ENCODE measurements at regions of chr20 and their contacts with region 1.

Region 1: GRCh38 chr20:53750827-53751619 is 157.4 kb upstream of the ZNF217 start:
- DNase-seq: peak; percentile 69
- ATAC-seq: peak; percentile 83
- H3K4me3 ChIP-seq: peak overlapping the region; percentile 2; the same call in 1 of the 2 replicates
- H3K27ac ChIP-seq: peak overlapping the region; percentile 99
- H3K4me1 ChIP-seq: peaks cover 64% of the 10 kb centered on the region
- H3K27me3 ChIP-seq: no peaks in the 10 kb centered on the region
- CTCF ChIP-seq: no peak
- EP300 ChIP-seq: peak; percentile 56 to 89; a peak in 3 of 4 replicates
- POLR2A ChIP-seq: peak; percentile 45; the same call in 1 of the 2 replicates
- RAD21 ChIP-seq: peak; percentile 47

Region 2: DNA sequence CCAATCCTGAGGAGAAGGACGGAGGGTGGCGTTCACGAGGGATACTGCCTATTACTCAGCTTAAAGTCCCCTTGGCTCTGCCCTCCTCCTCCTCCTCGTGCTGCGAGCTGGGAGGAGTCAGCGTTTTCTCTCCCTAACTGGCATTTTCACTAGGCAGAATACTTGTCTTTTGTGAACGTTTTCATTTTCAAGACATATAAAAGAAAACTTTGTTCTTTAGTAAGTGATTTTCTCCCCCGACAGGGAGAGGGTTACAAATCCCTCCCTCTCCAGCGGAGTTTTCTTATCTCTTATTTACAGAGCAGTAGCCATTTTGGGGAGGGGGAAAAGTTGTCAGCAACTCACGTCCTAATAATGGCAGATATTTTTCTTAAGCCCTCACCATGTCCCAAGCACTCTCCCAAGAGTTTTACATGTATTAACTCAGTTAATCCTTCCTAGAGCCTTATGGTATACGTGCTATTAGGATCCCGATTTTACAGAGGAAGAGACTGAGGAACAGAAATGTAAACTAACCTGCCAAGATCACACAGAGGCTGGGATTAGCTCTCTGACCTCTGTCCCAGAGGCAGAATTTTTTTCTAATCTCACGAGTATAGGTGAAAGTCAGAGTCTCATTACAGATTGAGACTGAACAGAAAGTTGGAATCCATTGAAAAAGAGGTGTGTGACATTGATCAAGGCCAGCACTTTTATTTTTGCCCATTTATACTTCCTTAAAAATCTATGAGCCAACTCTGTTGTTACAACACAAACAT is 127.4 kb before region 1 on chr20:
- CTCF ChIA-PET with region 1: interaction called, 3 read pairs
- POLR2A ChIA-PET with region 1: no interaction called
- RAD21 ChIA-PET with region 1: interaction called, 10 read pairs
- SMC1A ChIA-PET with region 1: interaction called, 15 read pairs
- in situ Hi-C with region 1: no loop called
- intact Hi-C with region 1: no loop called
- DNase-seq: peak; percentile 60
- ATAC-seq: peak; percentile 81
- H3K4me3 ChIP-seq: peak overlapping the region; percentile 54
- H3K27ac ChIP-seq: peak overlapping the region; percentile 99
- H3K4me1 ChIP-seq: peaks cover 38% of the 10 kb centered on the region
- H3K27me3 ChIP-seq: no peaks in the 10 kb centered on the region
- CTCF ChIP-seq: 0 out of 6 replicates have a peak, but pooled peaks of 1 of the 3 experiments have one; percentile 8
- EP300 ChIP-seq: no peak
- POLR2A ChIP-seq: peak; percentile 61
- RAD21 ChIP-seq: 0 out of 2 replicates have a peak, but pooled peaks have one; percentile 10

Region 3: GRCh38 chr20:53684971-53685797 is 65.8 kb before region 1 on chr20:
- CTCF ChIA-PET with region 1: interaction called, 3 read pairs
- POLR2A ChIA-PET with region 1: no interaction called
- RAD21 ChIA-PET with region 1: interaction called, 3 read pairs
- SMC1A ChIA-PET with region 1: interaction called, 10 read pairs
- in situ Hi-C with region 1: no loop called
- intact Hi-C with region 1: no loop called
- DNase-seq: no peak
- ATAC-seq: peak; percentile 25
- H3K4me3 ChIP-seq: no peak overlapping the region
- H3K27ac ChIP-seq: peak overlapping the region; percentile 43; the same call in 1 of the 2 replicates
- H3K4me1 ChIP-seq: peaks cover 25% of the 10 kb centered on the region
- H3K27me3 ChIP-seq: no peaks in the 10 kb centered on the region
- CTCF ChIP-seq: no peak
- EP300 ChIP-seq: no peak
- POLR2A ChIP-seq: no peak
- RAD21 ChIP-seq: no peak

Region 4: DNA sequence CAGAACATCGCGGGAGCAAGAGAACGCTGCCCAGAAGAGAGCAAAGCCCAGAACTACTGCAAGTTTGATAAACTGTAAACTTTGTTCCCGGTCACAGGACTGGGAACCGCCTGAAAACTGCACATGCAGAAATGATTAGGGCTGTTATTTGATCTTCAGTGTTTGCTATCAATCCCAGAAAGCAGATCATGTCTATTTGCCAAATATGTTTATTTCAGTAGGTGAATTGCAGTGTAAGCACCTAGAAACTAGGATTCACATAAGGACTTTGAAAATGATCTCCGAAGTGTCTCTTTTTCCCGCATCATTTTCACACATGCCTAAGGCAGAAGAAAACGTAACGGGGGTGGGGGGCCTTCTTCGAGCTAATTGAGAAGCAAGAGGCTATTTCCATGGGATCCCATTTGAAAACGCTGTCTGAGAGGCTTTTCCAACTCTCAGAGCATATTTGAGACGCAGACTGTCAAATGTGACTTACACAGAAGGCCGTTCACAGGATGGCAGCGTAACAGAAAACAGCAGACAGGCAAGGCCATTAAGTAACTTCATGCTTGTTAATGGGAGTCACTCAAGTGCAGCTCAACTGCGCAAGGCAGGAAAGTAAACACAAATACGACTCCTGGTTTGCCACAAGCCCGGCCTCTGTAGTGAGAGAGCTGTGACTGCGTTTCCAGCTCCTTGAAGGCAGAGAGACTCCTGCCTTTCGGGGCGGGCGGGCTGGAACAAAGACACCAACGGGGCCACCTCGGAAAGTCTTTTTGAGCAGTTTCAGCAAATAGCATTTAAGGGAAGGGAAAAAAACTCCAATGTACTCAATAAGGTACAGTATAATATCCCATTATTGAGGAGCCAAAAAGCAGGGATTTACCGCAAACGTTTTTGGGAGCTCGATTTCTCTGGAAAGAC is 12.7 kb before region 1 on chr20:
- CTCF ChIA-PET with region 1: interaction called, 47 read pairs
- POLR2A ChIA-PET with region 1: interaction called, 49 read pairs
- RAD21 ChIA-PET with region 1: interaction called, 41 read pairs
- SMC1A ChIA-PET with region 1: interaction called, 290 read pairs
- in situ Hi-C with region 1: no loop called
- intact Hi-C with region 1: no loop called
- DNase-seq: no peak
- ATAC-seq: no peak
- H3K4me3 ChIP-seq: 0 out of 2 replicates have a peak overlapping the region, but pooled peaks have one; percentile 69
- H3K27ac ChIP-seq: peak overlapping the region; percentile 86
- H3K4me1 ChIP-seq: peaks cover 56% of the 10 kb centered on the region
- H3K27me3 ChIP-seq: no peaks in the 10 kb centered on the region
- CTCF ChIP-seq: no peak
- EP300 ChIP-seq: no peak
- POLR2A ChIP-seq: no peak
- RAD21 ChIP-seq: no peak

Region 5: GRCh38 chr20:53839423-53840176 is 88.6 kb after region 1 on chr20:
- CTCF ChIA-PET with region 1: interaction called, 4 read pairs
- POLR2A ChIA-PET with region 1: interaction called, 3 read pairs
- RAD21 ChIA-PET with region 1: interaction called, 15 read pairs
- SMC1A ChIA-PET with region 1: interaction called, 8 read pairs
- in situ Hi-C with region 1: no loop called
- intact Hi-C with region 1: loop called (anchors 2 kb)
- DNase-seq: peak; percentile 96
- ATAC-seq: peak; percentile 78
- H3K4me3 ChIP-seq: no peak overlapping the region
- H3K27ac ChIP-seq: peak overlapping the region; percentile 70
- H3K4me1 ChIP-seq: peaks cover 47% of the 10 kb centered on the region
- H3K27me3 ChIP-seq: no peaks in the 10 kb centered on the region
- CTCF ChIP-seq: no peak
- EP300 ChIP-seq: peak; percentile 39 to 54; a peak in 2 of 4 replicates
- POLR2A ChIP-seq: peak; percentile 53; the same call in 1 of the 2 replicates
- RAD21 ChIP-seq: 0 out of 2 replicates have a peak, but pooled peaks have one; percentile 3

Region 6: DNA sequence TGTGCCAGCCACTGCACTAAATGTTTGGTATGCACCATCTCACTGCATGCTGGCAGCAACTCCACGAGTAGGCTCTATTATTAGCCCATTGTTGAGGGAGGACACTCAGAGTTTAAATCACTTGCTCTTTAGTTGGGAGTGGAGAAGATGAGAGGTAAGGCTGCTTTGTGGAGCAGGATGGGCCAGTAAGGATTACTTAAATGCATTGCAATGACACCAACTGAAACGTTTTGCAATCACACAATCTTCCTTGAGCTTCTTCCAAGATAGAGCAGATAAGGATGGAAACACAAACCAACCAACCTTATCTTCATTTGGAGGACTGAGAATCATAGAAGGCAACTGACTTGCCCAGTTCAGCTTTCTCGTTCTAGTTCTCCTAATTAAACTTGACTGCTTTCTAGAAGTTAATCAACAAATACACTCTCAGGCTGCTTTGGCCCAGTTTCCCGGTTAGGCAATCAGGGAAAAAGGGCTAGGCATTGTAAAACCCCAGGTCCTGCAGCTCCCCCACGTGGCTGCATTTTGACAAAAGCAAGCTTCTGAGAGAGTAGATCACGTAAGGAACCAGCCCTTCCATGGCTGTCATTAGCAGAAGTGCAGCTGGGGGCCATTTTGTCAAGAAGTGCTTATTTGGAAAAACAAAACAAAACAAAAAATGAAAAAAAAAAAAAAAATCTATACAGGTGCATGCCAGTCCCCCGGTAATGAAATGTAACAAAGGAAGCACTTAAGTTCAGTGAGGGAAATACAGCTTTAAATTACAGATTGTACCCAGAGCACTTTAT is 188.7 kb after region 1 on chr20:
- CTCF ChIA-PET with region 1: interaction called, 12 read pairs
- POLR2A ChIA-PET with region 1: no interaction called
- RAD21 ChIA-PET with region 1: interaction called, 12 read pairs
- SMC1A ChIA-PET with region 1: interaction called, 6 read pairs
- in situ Hi-C with region 1: loop called (anchors 5 kb)
- intact Hi-C with region 1: no loop called
- DNase-seq: peak; percentile 93
- ATAC-seq: peak; percentile 81
- H3K4me3 ChIP-seq: 0 out of 2 replicates have a peak overlapping the region, but pooled peaks have one; percentile 63
- H3K27ac ChIP-seq: peak overlapping the region; percentile 84
- H3K4me1 ChIP-seq: peaks cover 54% of the 10 kb centered on the region
- H3K27me3 ChIP-seq: no peaks in the 10 kb centered on the region
- CTCF ChIP-seq: peak; percentile 70 to 96 (median 83)
- EP300 ChIP-seq: 0 out of 4 replicates have a peak, but pooled peaks of 1 of the 2 experiments have one; percentile 10
- POLR2A ChIP-seq: no peak
- RAD21 ChIP-seq: peak; percentile 98

Region 7: GRCh38 chr20:54132612-54133433 is 381.8 kb after region 1 on chr20:
- CTCF ChIA-PET with region 1: no interaction called
- POLR2A ChIA-PET with region 1: no interaction called
- RAD21 ChIA-PET with region 1: no interaction called
- SMC1A ChIA-PET with region 1: no interaction called
- in situ Hi-C with region 1: no loop called
- intact Hi-C with region 1: no loop called
- DNase-seq: no peak
- ATAC-seq: no peak; the same call in 2 of the 3 replicates
- H3K4me3 ChIP-seq: no peak overlapping the region
- H3K27ac ChIP-seq: no peak overlapping the region
- H3K4me1 ChIP-seq: no peaks in the 10 kb centered on the region
- H3K27me3 ChIP-seq: no peaks in the 10 kb centered on the region
- CTCF ChIP-seq: no peak
- EP300 ChIP-seq: no peak
- POLR2A ChIP-seq: no peak
- RAD21 ChIP-seq: no peak

Measured in GM12878 (cell line).